ENCODE measurements at regions of chr3 and their contacts with region 1.

Region 1: GRCh38 chr3:4712143-4712542 is 219.0 kb downstream of the ITPR1 start:
- DNase-seq: peak; percentile 99
- H3K4me3 Mint-ChIP-seq: peak overlapping the region; percentile 42
- H3K27ac Mint-ChIP-seq: peak overlapping the region; percentile 46
- H3K4me1 Mint-ChIP-seq: peaks cover 22% of the 10 kb centered on the region
- H3K27me3 Mint-ChIP-seq: no peaks in the 10 kb centered on the region
- CTCF ChIP-seq: no peak

Region 2: GRCh38 chr3:4736284-4736861 is 24.2 kb after region 1 on chr3:
- CTCF ChIA-PET with region 1: interaction called, 10 read pairs
- POLR2A ChIA-PET with region 1: no interaction called
- intact Hi-C with region 1: no loop called
- DNase-seq: peak; percentile 91
- H3K4me3 Mint-ChIP-seq: peak overlapping the region; percentile 25
- H3K27ac Mint-ChIP-seq: peak overlapping the region; percentile 53
- H3K4me1 Mint-ChIP-seq: peaks cover 28% of the 10 kb centered on the region
- H3K27me3 Mint-ChIP-seq: no peaks in the 10 kb centered on the region
- CTCF ChIP-seq: no peak

Region 3: DNA sequence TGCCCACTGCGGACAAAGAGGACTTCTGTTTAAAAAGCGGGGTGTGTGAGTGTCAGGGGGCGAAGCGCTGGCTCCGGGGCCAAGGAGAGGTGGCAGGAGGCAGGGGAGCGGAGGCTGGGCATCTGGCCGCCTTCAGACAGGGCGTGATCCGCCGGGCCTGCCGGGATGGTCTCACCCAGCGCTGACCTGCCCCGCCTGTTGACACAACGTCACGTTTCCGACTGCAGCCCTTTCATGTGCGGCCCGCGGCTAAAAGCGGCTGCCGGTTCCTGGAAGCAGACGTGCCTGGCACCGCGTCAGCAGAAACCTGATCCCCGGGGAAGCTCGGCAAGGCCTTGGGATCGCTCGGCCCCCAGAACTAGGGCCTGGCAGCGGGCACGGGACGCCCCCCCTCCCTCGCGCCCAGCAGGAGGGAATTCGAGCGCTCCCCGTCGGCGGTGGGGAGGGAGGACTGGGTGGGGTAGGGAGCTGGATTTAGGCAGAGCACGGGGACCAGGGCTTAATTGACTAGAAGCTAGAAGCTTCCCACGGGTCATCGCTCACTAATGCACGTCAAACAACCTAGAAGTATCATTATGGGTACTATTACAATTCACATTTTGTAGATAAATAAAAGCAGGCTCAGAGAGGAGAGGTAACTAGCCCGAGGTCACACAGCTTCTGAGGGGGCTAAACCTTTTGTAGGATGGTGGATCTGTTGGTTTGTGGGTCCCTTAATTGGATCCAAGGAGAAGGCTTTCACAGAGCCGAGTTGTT is 274.8 kb after region 1 on chr3:
- CTCF ChIA-PET with region 1: interaction called, 53 read pairs
- POLR2A ChIA-PET with region 1: interaction called, 49 read pairs
- intact Hi-C with region 1: no loop called
- DNase-seq: peak; percentile 98
- H3K4me3 Mint-ChIP-seq: peak overlapping the region; percentile 52
- H3K27ac Mint-ChIP-seq: no peak overlapping the region
- H3K4me1 Mint-ChIP-seq: peaks cover 35% of the 10 kb centered on the region
- H3K27me3 Mint-ChIP-seq: no peaks in the 10 kb centered on the region
- CTCF ChIP-seq: no peak

Region 4: DNA sequence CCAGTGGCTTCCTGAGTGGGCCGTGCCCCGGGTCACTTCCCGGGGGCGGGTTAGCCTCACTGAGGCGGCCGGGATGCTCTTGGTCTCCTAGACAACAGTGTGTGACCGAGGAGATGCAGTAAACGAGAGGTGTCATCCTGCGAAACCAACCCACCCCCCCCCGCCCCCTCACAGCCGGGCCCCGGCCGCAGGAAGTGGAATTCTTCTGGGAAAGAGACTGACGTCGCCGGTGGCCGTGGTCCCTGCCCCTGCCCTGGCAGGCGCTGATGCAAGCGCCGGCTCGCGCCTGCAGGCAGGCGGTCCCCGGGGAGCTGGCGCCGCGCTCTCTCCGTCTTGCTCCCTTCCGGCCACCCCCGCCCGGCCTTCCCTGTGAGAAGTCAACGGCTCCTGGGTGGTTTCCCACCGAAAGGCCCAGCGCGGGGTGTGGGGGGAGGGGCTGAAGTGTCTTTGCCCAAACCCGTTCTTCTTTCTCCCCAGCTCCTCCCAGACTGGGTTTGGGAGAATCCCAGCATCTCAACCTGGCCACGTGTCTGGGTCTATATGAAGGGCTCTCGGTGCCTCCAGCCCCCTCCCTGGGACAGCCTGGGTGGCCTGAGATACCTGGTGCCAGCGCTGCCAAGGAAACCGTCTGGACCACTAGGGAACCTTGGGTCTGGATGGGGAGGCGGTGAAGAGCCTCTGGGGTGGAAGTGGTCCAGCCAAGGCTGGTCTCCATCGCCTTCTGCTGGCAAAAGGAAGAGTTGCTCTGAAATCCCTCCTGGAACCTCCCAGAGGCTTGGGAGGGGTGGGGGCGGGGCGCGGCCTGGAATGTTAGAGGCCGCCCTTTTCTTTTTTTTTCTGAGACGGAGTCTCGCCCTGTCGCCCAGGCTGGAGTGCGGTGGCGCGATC is 314.4 kb after region 1 on chr3:
- CTCF ChIA-PET with region 1: interaction called, 141 read pairs
- POLR2A ChIA-PET with region 1: interaction called, 40 read pairs
- intact Hi-C with region 1: loop called (anchors 1 kb)
- DNase-seq: peak; percentile 96
- H3K4me3 Mint-ChIP-seq: peak overlapping the region; percentile 74
- H3K27ac Mint-ChIP-seq: peak overlapping the region; percentile 84
- H3K4me1 Mint-ChIP-seq: peaks cover 23% of the 10 kb centered on the region
- H3K27me3 Mint-ChIP-seq: no peaks in the 10 kb centered on the region
- CTCF ChIP-seq: peak; percentile 71

Region 5: GRCh38 chr3:5063724-5064123 is 351.6 kb after region 1 on chr3:
- CTCF ChIA-PET with region 1: interaction called, 89 read pairs
- POLR2A ChIA-PET with region 1: interaction called, 24 read pairs
- intact Hi-C with region 1: loop called (anchors 1 kb)
- DNase-seq: no peak
- H3K4me3 Mint-ChIP-seq: no peak overlapping the region
- H3K27ac Mint-ChIP-seq: no peak overlapping the region
- H3K4me1 Mint-ChIP-seq: peaks cover 4% of the 10 kb centered on the region
- H3K27me3 Mint-ChIP-seq: peaks cover 11% of the 10 kb centered on the region
- CTCF ChIP-seq: no peak

Region 6: DNA sequence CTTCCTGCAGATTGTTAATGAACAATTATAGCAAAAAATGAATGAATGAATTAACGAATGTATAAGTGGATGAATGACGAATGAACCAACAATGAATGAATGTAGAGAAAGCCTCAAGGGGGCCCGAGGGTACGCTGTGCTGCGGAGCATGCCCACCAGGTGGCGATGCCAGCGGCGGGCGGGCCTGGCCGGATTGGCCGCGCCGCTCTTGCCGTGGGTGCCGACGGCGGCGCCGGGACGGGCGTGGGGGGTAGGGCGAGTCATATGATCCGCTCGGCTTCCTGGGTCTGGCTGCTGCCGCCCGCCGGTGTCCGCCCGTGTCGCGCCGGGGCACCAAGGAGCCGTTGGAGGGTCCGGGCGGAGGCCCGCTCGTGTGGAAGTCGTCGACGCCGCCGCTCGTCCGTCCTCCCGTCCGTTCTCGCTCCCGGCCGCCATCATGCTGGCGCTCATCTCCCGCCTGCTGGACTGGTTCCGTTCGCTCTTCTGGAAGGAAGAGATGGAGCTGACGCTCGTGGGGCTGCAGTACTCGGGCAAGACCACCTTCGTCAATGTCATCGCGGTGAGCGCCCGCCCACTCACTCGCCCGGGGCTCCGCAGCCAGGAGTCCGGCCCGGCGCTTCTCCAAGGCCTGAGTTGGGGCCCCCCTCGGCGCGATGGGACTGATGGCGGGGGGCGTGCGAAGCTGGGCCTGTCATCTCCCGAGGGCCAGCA is 410.0 kb after region 1 on chr3 and contains the start of gene ARL8B:
- CTCF ChIA-PET with region 1: interaction called, 15 read pairs
- POLR2A ChIA-PET with region 1: interaction called, 8 read pairs
- intact Hi-C with region 1: loop called (anchors 1 kb)
- DNase-seq: peak; percentile 84
- H3K4me3 Mint-ChIP-seq: peak within 1 kb of the TSS; percentile 75
- H3K27ac Mint-ChIP-seq: peak within 1 kb of the TSS; percentile 82
- H3K4me1 Mint-ChIP-seq: peaks cover 12% of the 10 kb centered on the region
- H3K27me3 Mint-ChIP-seq: no peaks in the 10 kb centered on the region
- CTCF ChIP-seq: peak; percentile 92
- total RNA-seq, gene ARL8B: 53.6 and 74.3 TPM in 2 replicates

Measured in MCF 10A (cell line).